ENCODE measurements at regions of chr3 and their contacts with region 1.

Region 1: GRCh38 chr3:163936543-163936942 is 1141.8 kb downstream of the SI start:
- DNase-seq: no peak

Region 2: GRCh38 chr3:163916596-163917554 is 19.7 kb before region 1 on chr3:
- intact Hi-C with region 1: loop called in 1 of 2 experiments (anchors 1 kb)
- DNase-seq: no peak

Region 3: GRCh38 chr3:163951397-163951987 is 14.9 kb after region 1 on chr3:
- intact Hi-C with region 1: no loop called
- DNase-seq: no peak